ENCODE measurements at regions of chr16 and their contacts with region 1.

Region 1: GRCh38 chr16:10743610-10744393 is at the start of gene NUBP1:
- DNase-seq: peak; percentile 99
- ATAC-seq: peak; percentile 91
- H3K4me3 Mint-ChIP-seq: peak within 1 kb of the TSS; percentile 95
- H3K27ac Mint-ChIP-seq: peak within 1 kb of the TSS; percentile 99
- H3K4me1 Mint-ChIP-seq: peaks cover 54% of the 10 kb centered on the region
- H3K27me3 Mint-ChIP-seq: no peaks in the 10 kb centered on the region
- total RNA-seq, gene NUBP1: 24.9 to 28.4 TPM

Region 2: GRCh38 chr16:10761373-10761772 is 17.6 kb after region 1 on chr16:
- CTCF ChIA-PET with region 1: no interaction called
- POLR2A ChIA-PET with region 1: no interaction called
- DNase-seq: no peak
- ATAC-seq: no peak
- H3K4me3 Mint-ChIP-seq: no peak overlapping the region
- H3K27ac Mint-ChIP-seq: no peak overlapping the region
- H3K4me1 Mint-ChIP-seq: peaks cover 19% of the 10 kb centered on the region
- H3K27me3 Mint-ChIP-seq: no peaks in the 10 kb centered on the region

Region 3: DNA sequence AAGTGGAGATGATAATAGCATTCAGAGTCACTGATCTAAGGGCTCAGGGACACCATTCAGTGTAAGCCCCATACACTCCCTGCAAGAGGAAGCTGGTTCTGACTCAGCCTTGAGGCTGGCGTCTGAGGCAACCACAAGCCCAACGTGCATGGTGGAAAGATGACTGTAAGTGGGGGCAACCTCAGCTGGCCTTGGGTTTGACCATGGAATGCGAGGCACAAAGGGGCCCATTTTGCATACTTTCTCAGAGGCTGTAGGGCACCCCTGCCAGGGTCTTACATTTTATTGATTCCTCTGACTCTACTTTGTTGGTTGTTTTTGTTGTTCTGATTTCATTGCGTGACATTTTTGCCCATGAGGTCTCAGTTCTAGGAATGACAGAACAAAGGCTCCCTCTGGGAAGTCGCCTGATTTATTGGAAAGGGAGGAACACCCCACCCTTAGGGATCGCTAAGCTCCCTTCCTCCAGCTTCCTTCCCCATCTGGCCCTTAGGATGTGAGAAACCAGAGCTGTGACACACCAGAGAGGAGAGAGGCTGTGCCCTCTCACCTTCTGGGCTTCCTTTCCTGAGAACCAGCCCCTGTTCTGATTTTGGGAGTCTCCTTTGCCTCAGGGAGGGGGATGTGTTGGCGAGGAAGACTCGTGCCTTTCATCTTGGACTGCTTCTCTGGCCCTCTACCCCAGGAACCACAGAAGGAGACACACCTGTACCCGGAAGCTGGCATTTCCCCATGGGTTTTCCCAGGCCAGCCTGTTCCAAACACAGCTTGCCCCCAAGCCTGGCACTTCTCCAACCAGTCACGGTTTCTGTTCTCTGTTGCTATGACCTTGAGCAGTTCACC is 127.6 kb after region 1 on chr16:
- CTCF ChIA-PET with region 1: interaction called, 3 read pairs
- POLR2A ChIA-PET with region 1: interaction called, 11 read pairs
- DNase-seq: peak; percentile 83
- ATAC-seq: peak; percentile 90
- H3K4me3 Mint-ChIP-seq: peak overlapping the region; percentile 51
- H3K27ac Mint-ChIP-seq: peak overlapping the region; percentile 85
- H3K4me1 Mint-ChIP-seq: peaks cover 83% of the 10 kb centered on the region
- H3K27me3 Mint-ChIP-seq: peaks cover 24% of the 10 kb centered on the region

Region 4: GRCh38 chr16:10876799-10877341 is 133.1 kb after region 1 on chr16 and contains the start of gene CIITA:
- CTCF ChIA-PET with region 1: interaction called, 3 read pairs
- POLR2A ChIA-PET with region 1: interaction called, 13 read pairs
- DNase-seq: peak; percentile 84
- ATAC-seq: peak; percentile 59
- H3K4me3 Mint-ChIP-seq: peak within 1 kb of the TSS; percentile 96
- H3K27ac Mint-ChIP-seq: peak within 1 kb of the TSS; percentile 76
- H3K4me1 Mint-ChIP-seq: peaks cover 91% of the 10 kb centered on the region
- H3K27me3 Mint-ChIP-seq: peaks cover 17% of the 10 kb centered on the region
- total RNA-seq, gene CIITA: 23.3 to 23.6 TPM